PC-3 (cell line): ENCODE measurements at regions of chr17 and their contacts with region 1.

Region 1: DNA sequence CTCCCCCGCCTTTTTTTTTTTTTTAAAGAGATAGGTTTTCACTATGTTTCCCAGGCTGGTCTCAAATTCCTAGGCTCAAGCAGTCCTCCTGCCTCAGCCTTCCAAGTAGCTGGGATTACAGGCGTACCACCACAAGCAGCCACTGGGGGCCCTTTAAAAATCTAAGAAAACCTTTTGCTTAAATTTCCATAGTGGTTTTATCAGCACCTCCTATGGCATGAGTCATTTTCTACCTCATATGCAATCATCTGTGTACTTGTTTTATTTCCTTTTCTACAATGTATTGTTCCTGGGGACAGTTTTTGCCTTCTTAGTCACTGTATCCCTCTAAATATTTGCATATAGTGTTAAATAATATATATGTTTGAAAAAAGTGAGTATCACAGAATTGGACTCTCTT is 29.2 kb downstream of the GNA13 start:
- DNase-seq: peak; percentile 96
- ATAC-seq: peak; percentile 83
- H3K4me3 ChIP-seq: no peak overlapping the region
- H3K27ac ChIP-seq: peak overlapping the region; percentile 81
- H3K4me1 ChIP-seq: peaks cover 37% of the 10 kb centered on the region
- H3K27me3 ChIP-seq: no peaks in the 10 kb centered on the region
- CTCF ChIP-seq: peak; percentile 68

Region 2: DNA sequence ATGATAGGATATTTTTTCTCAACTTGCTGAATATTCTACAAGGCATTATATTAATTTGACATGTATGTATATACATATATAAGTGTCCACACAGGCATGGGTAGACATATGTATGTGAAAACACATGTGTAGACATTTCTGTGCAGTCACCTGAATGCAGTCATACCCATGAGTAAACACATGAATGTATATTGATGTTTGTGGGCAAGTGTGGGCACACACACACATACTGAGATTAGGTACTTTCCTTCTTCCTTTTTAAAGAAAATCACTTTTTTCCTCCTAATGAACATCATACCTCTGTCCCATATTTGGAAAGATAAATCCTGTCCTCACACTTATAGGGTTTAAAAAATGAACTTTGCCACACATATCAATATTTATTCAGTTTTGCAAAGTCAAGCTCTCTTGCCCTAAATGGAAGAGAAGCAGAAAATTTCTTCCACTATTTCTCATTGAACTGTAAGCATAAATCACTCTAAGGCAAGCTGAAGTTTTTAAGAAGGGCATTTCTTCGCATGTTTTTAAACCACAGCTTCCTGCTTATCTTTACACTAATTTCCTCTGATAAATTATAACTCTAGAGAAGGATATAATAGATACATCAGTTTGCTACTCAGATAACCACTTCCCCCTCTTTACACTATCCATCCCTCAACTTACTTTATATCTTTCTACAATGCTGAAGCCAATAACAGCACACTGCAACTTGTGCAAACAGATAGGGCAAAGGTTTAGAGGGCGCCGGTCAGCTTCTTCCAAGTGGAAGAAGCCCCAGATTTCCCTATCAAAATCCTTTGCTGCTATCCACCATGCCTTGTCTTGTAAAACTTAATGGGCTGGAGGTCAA is 58.4 kb before region 1 on chr17:
- CTCF ChIA-PET with region 1: no interaction called
- POLR2A ChIA-PET with region 1: no interaction called
- intact Hi-C with region 1: loop called (anchors 2 kb)
- DNase-seq: no peak
- ATAC-seq: no peak
- H3K4me3 ChIP-seq: no peak overlapping the region
- H3K27ac ChIP-seq: no peak overlapping the region
- H3K4me1 ChIP-seq: peaks cover 24% of the 10 kb centered on the region
- H3K27me3 ChIP-seq: no peaks in the 10 kb centered on the region
- CTCF ChIP-seq: no peak

Region 3: DNA sequence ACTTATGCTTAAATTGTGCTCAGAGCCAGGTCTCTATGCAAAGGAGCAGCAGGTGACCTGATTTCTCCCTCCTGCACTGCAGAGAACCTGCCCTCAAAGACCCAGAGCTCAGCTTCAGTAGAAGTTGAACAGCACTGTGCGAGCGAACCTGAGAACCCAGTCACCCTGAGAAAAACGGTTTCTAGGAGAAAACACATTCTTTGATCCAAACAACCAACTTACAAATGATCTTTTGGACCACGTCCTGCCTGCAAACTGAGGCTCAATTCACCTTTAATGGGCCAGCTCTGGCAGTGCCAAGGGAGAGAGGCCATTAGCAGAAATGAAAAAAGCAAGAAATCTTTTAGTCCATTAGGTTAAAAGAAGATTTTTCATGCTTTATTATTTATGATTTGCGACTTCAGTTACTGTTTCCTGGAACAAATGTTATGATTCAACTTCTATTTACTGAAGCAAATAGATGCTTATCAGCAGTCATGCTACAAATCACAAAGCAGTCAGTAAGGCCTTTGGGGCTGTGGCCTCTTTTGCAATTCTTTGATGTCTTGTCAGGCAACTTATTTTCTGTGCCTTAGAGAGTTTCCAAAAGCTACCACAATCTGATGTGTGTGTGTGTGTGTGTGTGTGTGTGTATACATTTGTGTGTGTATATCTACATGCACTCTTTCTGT is 42.3 kb before region 1 on chr17:
- CTCF ChIA-PET with region 1: no interaction called
- POLR2A ChIA-PET with region 1: interaction called, 3 read pairs
- intact Hi-C with region 1: loop called (anchors 2 kb)
- DNase-seq: peak; percentile 90
- ATAC-seq: peak; percentile 90
- H3K4me3 ChIP-seq: peak overlapping the region; percentile 26; the same call in 1 of the 2 replicates
- H3K27ac ChIP-seq: peak overlapping the region; percentile 83
- H3K4me1 ChIP-seq: peaks cover 38% of the 10 kb centered on the region
- H3K27me3 ChIP-seq: no peaks in the 10 kb centered on the region
- CTCF ChIP-seq: no peak

Region 4: GRCh38 chr17:65062143-65062915 is 35.0 kb after region 1 on chr17:
- CTCF ChIA-PET with region 1: no interaction called
- POLR2A ChIA-PET with region 1: no interaction called
- intact Hi-C with region 1: no loop called
- DNase-seq: peak; percentile 57
- ATAC-seq: peak; percentile 50
- H3K4me3 ChIP-seq: no peak overlapping the region; the same call in 1 of the 2 replicates
- H3K27ac ChIP-seq: peak overlapping the region; percentile 25
- H3K4me1 ChIP-seq: peaks cover 38% of the 10 kb centered on the region
- H3K27me3 ChIP-seq: no peaks in the 10 kb centered on the region
- CTCF ChIP-seq: no peak